Motor neuron (in vitro differentiated cells): ENCODE measurements at regions of chr1 and their contacts with region 1.

Region 1: DNA sequence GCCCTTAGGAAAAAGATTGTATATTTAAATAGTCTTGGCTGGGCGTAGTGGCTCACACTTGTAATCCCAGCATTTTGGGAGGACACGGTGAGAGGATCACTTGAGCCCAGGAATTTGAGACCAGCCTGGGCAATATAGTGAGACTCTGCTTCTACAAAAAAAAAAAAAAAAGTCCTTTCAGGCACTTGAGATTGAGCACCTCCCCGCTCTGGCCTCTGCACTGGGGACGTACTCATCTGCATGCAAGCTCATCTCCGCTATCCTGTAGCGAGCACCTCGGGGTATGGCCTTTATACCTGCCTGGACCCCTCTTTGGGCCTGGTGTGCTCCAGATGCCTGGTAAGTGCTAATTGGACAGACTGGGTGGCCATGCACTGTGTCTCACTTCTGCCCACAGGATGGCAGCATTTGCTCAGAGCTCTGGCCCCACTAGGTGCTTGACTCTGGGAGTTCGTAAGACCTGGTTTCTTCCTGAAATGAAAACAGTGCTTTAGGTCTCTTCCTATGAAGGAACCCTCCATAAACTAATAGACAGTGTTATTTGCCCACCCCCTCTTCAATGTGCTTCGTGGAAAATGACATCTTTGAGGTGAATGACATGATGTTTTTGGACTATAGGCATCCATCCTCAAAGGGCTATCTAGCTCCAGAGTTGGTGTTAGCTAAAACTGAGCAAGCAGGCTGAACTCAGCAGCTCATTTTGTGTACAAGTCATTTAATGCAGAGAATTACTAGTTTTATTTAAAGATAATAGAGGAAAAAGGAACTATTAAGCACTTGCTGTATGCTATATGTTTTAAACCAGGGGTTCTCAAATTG is 61.7 kb upstream of the ADAR start:
- ATAC-seq: peak; percentile 99 to 100 (median 100)
- H3K4me3 ChIP-seq: no peak overlapping the region
- H3K27ac ChIP-seq: no peak overlapping the region
- H3K4me1 ChIP-seq: no peaks in the 10 kb centered on the region

Region 2: DNA sequence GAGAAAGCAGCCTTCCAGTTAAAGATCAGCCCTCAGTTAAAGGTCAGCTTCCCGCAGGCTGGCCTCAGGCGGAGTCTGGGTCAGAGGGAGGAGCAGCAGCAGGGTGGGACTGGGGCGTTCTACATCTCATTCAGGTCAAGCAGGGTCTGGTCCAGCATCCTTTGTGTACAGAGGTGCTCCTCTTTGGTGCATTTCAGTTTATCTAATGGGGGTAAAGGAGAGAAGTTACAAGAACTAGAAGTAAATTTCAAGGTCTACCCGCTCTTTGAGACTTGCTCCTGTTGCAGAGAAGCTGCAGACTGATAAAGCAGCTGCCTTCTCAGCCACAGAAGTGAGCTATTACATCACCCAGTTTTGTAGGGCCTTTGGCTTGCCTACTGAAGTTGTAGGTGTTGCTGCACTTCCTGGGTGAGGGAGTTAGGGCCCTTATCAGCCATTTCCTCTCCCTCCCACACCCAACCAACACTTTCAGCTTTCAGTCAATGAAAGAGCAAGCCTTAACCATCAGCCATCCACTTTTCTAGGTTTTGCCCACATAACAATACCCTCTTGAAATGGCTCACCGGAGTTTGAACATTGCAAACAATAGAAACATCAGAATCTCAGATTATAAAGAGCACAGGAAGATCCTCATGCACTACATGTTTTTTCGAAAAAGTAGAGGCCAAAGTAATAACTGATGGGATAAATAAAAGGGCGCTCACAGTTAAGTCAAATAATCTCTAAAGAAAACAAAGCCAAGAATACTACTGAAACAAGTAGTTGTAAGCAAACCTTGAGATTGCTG is 512.0 kb before region 1 on chr1:
- in situ Hi-C with region 1: no loop called
- ATAC-seq: peak in 1 of 8 experiments; percentile 31
- H3K4me3 ChIP-seq: no peak overlapping the region
- H3K27ac ChIP-seq: no peak overlapping the region
- H3K4me1 ChIP-seq: peaks cover 0 to 3% of the 10 kb centered on the region in 2 donors

Region 3: DNA sequence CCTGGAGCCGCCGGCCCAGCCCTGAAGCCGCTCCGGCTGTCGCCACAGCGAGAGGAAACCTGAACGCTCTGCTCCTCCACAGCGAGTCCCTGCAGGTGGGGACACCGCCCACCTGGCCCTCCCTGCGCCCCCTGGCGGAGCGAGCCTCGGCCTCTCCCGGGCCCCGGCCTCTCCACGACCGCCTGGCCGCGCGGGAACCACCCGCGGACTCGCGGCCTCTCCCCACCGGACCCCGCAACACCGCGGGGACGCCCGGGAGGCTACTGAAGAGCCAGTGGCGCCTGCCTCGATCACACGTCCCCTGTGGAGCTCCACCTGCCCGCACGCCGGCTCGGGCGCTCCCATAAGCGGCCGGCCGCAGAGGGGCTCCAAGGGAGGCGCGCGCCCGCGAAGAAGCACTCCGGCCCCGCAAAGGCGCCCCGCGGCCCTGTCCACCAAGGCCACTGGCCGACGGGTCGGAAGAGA is 90.8 kb after region 1 on chr1:
- in situ Hi-C with region 1: loop called in 1 of 9 experiments (anchors 25 kb)
- ATAC-seq: peak; percentile 68 to 99 (median 95)
- H3K4me3 ChIP-seq: peak overlapping the region; percentile 28 to 42 (median 31)
- H3K27ac ChIP-seq: no peak overlapping the region
- H3K4me1 ChIP-seq: no peaks in the 10 kb centered on the region

Region 4: DNA sequence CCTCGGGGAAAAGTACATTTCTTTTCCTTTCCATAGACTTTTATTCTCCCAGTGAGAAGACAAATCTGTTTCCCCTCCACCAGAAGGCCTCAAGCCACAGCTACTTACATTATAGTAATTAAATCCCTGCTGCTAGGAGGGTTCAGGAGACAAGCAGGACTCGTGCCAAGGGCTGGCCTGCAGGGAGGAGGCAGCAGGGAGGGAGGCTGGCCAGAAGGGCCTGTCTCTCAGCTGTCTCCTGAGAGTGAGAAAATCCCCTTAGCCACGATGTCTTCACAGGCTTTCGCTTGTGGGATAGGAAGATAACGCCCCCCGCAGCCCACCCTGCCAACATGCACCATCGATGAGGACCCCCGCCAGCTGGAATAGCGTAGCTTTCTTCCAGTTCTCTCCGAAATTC is 186.4 kb after region 1 on chr1:
- in situ Hi-C with region 1: no loop called
- ATAC-seq: peak in 5 of 8 experiments; percentile 25 to 73 (median 54)
- H3K4me3 ChIP-seq: no peak overlapping the region
- H3K27ac ChIP-seq: no peak overlapping the region
- H3K4me1 ChIP-seq: peaks cover 3 to 5% of the 10 kb centered on the region in 2 donors

Region 5: DNA sequence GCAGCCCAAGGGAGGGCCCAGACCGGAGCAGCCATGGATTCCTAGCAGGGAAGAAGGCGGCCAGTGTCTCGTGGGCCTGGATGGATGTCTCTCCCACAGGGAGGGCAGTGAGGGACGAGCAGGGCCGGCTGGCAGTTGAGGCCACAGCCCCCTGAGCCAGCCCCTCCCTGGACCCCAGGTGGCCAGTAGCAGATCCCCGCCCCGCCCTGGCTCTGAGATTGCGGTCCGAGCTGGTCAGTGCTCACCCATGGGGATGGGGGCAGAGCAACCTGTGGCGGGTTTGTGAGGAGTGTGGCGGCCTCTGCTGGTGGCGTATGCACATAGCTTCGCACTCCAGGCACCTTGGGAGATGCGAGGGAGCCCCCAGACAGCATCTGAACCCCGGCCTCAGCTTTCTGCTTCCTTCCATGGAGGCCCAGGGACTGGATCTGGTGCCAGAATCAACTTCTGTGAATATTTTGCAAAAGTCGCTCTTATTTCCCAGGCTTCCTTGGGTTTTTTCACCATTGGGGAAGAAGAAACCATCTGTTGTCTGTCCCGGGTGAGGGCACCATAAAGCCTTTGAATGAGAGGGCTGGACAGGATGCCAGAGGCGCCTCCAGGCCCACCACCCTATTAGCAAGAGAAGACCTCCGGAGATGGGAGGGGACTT is 208.8 kb after region 1 on chr1:
- in situ Hi-C with region 1: loop called in 8 of 9 experiments (anchors 5 to 25 kb)
- ATAC-seq: peak; percentile 89 to 100 (median 99)
- H3K4me3 ChIP-seq: peak overlapping the region in 2 of 5 donors; percentile 6 to 7
- H3K27ac ChIP-seq: no peak overlapping the region
- H3K4me1 ChIP-seq: peaks cover 4 to 15% of the 10 kb centered on the region in 2 donors

Region 6: GRCh38 chr1:154884869-154885701 is 215.4 kb after region 1 on chr1:
- in situ Hi-C with region 1: loop called in 8 of 9 experiments (anchors 5 to 25 kb)
- ATAC-seq: peak in 1 of 8 experiments; percentile 24
- H3K4me3 ChIP-seq: no peak overlapping the region
- H3K27ac ChIP-seq: no peak overlapping the region
- H3K4me1 ChIP-seq: peaks cover 0 to 10% of the 10 kb centered on the region in 2 donors